Activated CD4-positive, alpha-beta T cell treated with anti-CD3 and anti-CD28 coated beads for 36 hours (primary cell): ENCODE measurements at regions of chr14 and their contacts with region 1.

Region 1: DNA sequence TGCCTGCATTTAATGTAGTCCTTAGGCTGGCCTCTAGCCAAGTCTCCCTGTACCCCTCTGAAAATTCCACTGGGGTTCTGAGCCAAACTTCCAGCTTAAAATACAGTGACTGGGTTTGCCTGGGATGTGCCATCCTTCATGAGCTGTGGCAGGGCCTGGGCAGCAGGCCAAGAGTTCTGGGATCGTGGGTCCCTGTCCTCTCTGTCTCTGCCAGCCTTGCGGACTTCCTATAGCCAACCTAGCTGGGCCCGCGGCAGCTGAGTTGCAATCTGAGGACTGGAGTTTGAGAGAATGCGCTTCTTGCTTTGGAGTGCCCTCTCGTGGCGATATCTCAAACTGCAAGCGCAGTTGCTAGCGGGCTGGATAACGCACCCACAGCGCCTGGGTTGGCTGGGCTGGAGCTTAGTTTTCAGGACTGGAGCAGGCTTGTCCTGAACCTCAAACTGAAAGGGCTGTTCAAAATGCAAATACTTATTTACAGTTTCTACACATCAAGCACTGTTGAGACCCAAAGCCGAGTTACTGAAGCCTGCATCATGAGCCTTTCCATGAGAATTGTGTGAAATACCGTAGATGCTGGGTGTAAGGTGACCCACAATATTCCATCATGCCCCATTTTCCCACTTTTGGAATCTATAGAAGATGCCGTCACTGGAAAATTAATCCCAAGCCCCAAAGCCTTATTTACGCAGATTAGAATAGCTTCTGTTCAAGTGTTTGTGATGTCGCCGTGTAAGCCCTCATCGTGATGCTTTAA is 7.3 kb upstream of the IFI27L2 start:
- DNase-seq: peak; percentile 93
- ATAC-seq: peak; percentile 90
- H3K4me3 Mint-ChIP-seq: no peak overlapping the region
- H3K27ac Mint-ChIP-seq: no peak overlapping the region
- H3K4me1 Mint-ChIP-seq: peaks cover 5% of the 10 kb centered on the region
- H3K27me3 Mint-ChIP-seq: peaks cover 6% of the 10 kb centered on the region

Region 2: GRCh38 chr14:94026173-94026888 is 110.4 kb before region 1 on chr14 and contains the start of gene OTUB2:
- CTCF ChIA-PET with region 1: interaction called, 9 read pairs
- POLR2A ChIA-PET with region 1: no interaction called
- intact Hi-C with region 1: loop called in 1 of 2 experiments (anchors 2 kb)
- DNase-seq: peak; percentile 98
- ATAC-seq: peak; percentile 99
- H3K4me3 Mint-ChIP-seq: peak within 1 kb of the TSS; percentile 54
- H3K27ac Mint-ChIP-seq: no peak within 1 kb of the TSS
- H3K4me1 Mint-ChIP-seq: peaks cover 32% of the 10 kb centered on the region
- H3K27me3 Mint-ChIP-seq: no peaks in the 10 kb centered on the region
- total RNA-seq, gene OTUB2: 0.75 to 0.93 TPM

Region 3: DNA sequence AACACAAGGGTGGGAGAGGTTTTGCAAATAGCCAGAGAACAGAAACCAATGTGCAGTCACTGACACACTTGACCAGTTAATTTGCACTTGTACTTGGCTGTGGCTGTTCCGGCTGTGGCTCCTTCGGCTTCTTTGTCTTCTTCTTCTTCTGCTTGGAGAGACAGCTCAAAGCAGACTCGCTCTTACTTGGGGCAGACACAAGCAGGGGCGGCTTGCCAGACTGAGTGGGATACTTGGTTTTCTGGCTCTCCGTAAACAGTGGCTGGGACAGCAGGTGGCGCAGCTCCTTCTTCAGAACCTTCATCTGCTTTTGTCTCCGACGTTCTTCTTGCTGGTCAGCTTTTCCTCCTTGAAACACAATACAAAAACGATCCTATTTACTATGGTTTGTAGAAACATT is 85.6 kb before region 1 on chr14:
- CTCF ChIA-PET with region 1: interaction called, 21 read pairs
- POLR2A ChIA-PET with region 1: no interaction called
- intact Hi-C with region 1: no loop called
- DNase-seq: no peak
- ATAC-seq: no peak
- H3K4me3 Mint-ChIP-seq: no peak overlapping the region
- H3K27ac Mint-ChIP-seq: no peak overlapping the region
- H3K4me1 Mint-ChIP-seq: peaks cover 12% of the 10 kb centered on the region
- H3K27me3 Mint-ChIP-seq: no peaks in the 10 kb centered on the region

Region 4: DNA sequence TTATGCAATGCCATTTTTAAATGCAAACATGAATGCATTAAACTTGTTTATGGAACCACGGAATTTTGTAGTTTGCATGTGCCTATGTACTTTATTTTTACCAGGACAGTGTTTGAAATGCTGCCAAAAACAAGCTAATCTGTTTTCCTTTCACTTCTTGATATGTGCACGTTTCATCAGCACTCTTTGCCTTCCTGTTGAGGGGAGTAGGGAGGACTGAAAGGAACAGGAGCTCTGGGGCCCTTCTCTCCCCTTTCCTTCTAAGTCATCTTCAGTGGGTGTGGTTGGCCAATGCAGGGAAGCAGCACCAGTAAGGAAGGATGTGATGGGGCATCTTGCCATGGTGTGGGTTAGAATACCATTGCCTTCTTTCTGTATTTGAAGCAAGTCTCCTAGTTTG is 25.2 kb after region 1 on chr14:
- CTCF ChIA-PET with region 1: interaction called, 21 read pairs
- POLR2A ChIA-PET with region 1: no interaction called
- intact Hi-C with region 1: no loop called
- DNase-seq: peak; percentile 24
- ATAC-seq: no peak
- H3K4me3 Mint-ChIP-seq: no peak overlapping the region
- H3K27ac Mint-ChIP-seq: peak overlapping the region; percentile 65
- H3K4me1 Mint-ChIP-seq: peaks cover 73% of the 10 kb centered on the region
- H3K27me3 Mint-ChIP-seq: no peaks in the 10 kb centered on the region

Region 5: GRCh38 chr14:94180655-94181271 is 44.0 kb after region 1 on chr14:
- CTCF ChIA-PET with region 1: interaction called, 76 read pairs
- POLR2A ChIA-PET with region 1: interaction called, 4 read pairs
- intact Hi-C with region 1: loop called (anchors 1 kb)
- DNase-seq: peak; percentile 34
- ATAC-seq: peak; percentile 77
- H3K4me3 Mint-ChIP-seq: peak overlapping the region; percentile 81
- H3K27ac Mint-ChIP-seq: peak overlapping the region; percentile 55
- H3K4me1 Mint-ChIP-seq: peaks cover 52% of the 10 kb centered on the region
- H3K27me3 Mint-ChIP-seq: peaks cover 2% of the 10 kb centered on the region